Dorsolateral prefrontal cortex (tissue), 120 donors: ENCODE measurements at regions of chr7 and their contacts with region 1.

Region 1: GRCh38 chr7:4681886-4682620 is at the start of gene FOXK1:
- DNase-seq: peak in 8 of 10 donors; percentile 44 to 87 (median 69)
- H3K4me3 ChIP-seq: peak within 1 kb of the TSS; percentile 70 to 96 (median 90)
- H3K27ac ChIP-seq: peak within 1 kb of the TSS in 58 of 59 donors; percentile 32 to 92 (median 83)
- H3K27me3 ChIP-seq: no peaks in the 10 kb centered on the region
- CTCF ChIP-seq: peak in 3 of 56 donors; percentile 3 to 29 (median 25)
- total RNA-seq, gene FOXK1: 45.2 to 88.6 (median 58.7) TPM

Region 2: DNA sequence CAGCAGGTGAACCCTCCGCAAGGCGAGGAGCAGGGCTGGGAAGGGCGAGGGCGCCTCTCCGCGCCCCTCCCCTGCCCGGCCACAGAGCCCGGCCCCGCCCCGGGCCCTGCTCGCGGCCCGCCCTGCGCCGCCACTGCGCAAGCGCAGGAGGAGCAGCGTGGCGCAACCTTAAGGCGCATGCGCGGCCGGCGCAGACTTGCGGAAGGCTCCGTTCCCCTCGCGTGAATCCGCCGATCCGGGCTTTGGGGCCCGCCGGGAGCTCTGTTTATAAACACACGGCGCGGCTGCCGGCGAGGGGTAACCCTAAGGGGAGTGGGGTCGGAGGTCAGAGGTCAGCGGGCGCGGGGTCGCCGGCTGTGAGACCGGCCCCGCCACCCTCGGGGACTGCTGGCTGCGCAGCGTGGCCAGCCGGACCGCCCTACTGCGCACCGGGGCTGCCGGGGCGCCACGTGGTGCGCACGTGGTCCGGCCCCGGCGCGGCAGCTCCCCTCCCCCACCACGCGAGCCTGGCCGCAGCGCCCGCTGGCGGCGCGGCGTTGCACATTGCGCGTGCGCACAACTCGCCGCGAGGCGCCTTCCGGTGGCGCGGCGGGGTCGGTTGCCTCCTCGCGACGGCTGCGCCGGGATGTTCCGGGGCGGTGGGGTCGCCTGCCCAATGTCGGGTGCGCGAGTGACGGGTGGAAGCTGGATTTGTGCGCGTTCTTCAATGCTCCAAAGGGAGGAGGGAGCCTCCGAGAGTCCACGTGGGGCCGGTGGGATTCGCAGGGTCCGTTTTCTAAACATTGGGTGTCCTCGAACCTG is 40.2 kb before region 1 on chr7:
- intact Hi-C with region 1: loop called (anchors 1 kb)
- DNase-seq: peak; percentile 75 to 89 (median 82)
- H3K4me3 ChIP-seq: peak overlapping the region; percentile 63 to 100 (median 84)
- H3K27ac ChIP-seq: peak overlapping the region; percentile 81 to 99 (median 96)
- H3K27me3 ChIP-seq: no peaks in the 10 kb centered on the region
- CTCF ChIP-seq: peak in 55 of 56 donors; percentile 33 to 91 (median 61)

Region 3: GRCh38 chr7:4725014-4725849 is 43.2 kb after region 1 on chr7:
- intact Hi-C with region 1: loop called in 1 of 2 experiments (anchors 2 kb)
- DNase-seq: peak; percentile 65 to 85 (median 81)
- H3K4me3 ChIP-seq: peak overlapping the region; percentile 21 to 76 (median 59)
- H3K27ac ChIP-seq: peak overlapping the region; percentile 78 to 99 (median 96)
- H3K27me3 ChIP-seq: no peaks in the 10 kb centered on the region
- CTCF ChIP-seq: peak in 26 of 56 donors; percentile 4 to 41 (median 25)

Region 4: DNA sequence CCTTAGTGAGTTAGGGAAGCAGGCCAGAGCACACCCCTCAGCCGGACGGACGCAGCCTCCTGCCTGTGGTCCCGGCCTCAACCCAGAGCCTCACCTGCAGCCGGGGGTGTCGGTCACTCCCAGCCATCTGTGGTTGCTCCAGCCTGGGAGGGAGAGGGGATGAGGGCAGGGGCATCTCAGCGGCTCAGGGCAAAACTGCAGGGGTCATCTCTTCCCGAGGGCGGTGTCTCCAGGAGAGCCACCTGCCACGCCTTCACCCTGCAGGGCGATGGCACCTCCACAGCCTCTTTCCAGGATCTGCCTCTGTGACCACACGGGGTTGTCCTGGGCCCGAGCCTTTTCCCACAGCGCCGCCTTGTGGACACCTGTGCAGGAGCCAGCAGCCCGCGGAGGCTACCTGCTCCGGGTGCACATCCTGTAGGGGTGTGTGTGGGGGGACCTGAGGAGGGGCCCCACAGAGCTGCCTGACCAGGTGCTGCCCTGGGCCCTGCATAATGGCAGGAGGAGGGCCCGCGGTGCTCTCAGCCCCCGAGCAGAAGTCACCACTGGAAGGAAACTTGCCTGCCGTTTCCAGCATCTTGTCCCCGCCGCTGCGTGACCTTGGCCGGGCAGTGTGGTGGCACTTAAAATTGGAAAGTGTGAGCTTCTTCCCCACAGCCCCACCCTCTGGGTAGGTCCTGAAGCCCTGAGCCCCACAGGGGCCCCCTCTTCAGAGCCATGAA is 71.8 kb after region 1 on chr7:
- intact Hi-C with region 1: loop called (anchors 1 to 2 kb)
- DNase-seq: peak; percentile 73 to 86 (median 76)
- H3K4me3 ChIP-seq: peak overlapping the region in 1 of 59 donors; percentile 14
- H3K27ac ChIP-seq: peak overlapping the region in 51 of 59 donors; percentile 8 to 99 (median 90)
- H3K27me3 ChIP-seq: no peaks in the 10 kb centered on the region
- CTCF ChIP-seq: peak; percentile 70 to 99 (median 94)

Region 5: GRCh38 chr7:4861673-4862072 is 179.6 kb after region 1 on chr7 and contains the start of gene PAPOLB:
- intact Hi-C with region 1: no loop called
- DNase-seq: no peak
- H3K4me3 ChIP-seq: peak within 1 kb of the TSS in 50 of 59 donors; percentile 14 to 60 (median 44)
- H3K27ac ChIP-seq: no peak within 1 kb of the TSS
- H3K27me3 ChIP-seq: peaks cover 0 to 20% (median 0%) of the 10 kb centered on the region in 45 donors
- CTCF ChIP-seq: no peak
- total RNA-seq, gene PAPOLB: 0.19 to 1.7 (median 0.60) TPM

Region 6: GRCh38 chr7:4939971-4940728 is 258.1 kb after region 1 on chr7:
- intact Hi-C with region 1: no loop called
- DNase-seq: peak in 9 of 10 donors; percentile 19 to 86 (median 76)
- H3K4me3 ChIP-seq: peak overlapping the region in 5 of 59 donors; percentile 7 to 23 (median 12)
- H3K27ac ChIP-seq: peak overlapping the region in 41 of 59 donors; percentile 4 to 83 (median 53)
- H3K27me3 ChIP-seq: no peaks in the 10 kb centered on the region
- CTCF ChIP-seq: no peak

Region 7: DNA sequence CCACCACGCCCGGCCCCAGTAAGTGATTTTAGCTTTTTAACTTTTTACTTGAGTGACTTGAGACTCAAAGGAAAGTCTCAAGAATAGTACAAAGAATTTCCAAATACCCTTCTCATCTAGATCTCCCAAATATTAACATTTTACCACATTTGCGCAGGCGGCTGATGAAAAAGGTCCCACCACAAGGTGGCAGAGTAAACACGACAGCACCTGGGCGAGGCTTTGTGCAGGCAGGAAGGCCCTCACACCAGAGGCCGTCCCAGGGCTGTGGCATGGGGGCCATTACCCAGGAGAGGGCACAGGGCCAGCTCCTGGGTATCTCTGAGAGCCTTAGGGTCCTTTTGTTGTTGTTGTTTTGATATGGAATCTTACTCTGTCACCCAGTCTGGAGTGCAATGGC is 457.9 kb after region 1 on chr7:
- intact Hi-C with region 1: no loop called
- DNase-seq: peak in 6 of 10 donors; percentile 8 to 51 (median 36)
- H3K4me3 ChIP-seq: no peak overlapping the region
- H3K27ac ChIP-seq: no peak overlapping the region
- H3K27me3 ChIP-seq: no peaks in the 10 kb centered on the region
- CTCF ChIP-seq: peak in 49 of 56 donors; percentile 21 to 62 (median 41)